SK-N-SH (cell line): ENCODE measurements at regions of chr6 and their contacts with region 1.

Region 1: GRCh38 chr6:91055959-91056358 is 469.1 kb upstream of the MAP3K7 start:
- DNase-seq: no peak
- H3K4me3 ChIP-seq: no peak overlapping the region
- H3K27ac ChIP-seq: no peak overlapping the region
- H3K4me1 ChIP-seq: no peaks in the 10 kb centered on the region
- H3K27me3 ChIP-seq: no peaks in the 10 kb centered on the region
- CTCF ChIP-seq: no peak
- EP300 ChIP-seq: no peak
- RAD21 ChIP-seq: no peak

Region 2: DNA sequence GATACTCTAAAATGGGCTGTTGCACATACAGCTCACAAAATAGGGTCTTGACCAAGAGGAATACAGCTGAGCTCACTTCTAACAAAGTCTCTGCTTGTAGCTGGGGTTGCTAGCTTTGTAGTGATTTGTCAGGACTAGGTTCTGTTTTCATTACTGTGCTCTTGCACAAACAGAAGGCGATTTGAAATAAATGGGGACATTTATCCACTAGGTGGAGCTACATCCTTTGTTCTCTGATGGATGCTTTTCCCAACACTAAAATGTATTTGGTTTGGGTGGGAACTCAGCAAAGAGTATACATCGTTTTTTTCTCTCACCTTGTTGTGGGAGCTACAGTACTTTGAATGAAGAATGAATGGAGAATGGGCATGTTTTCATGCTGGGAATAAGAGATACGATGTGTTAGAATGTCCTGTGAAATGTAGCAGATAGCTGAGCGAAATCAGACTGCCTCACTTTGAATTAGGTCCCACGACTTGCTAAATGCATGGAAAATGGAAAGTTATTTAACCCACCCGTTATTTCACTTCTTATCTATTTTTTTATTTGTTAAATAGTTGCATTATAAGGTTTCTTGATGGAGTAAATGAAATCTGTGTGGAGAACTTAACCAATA is 25.6 kb after region 1 on chr6:
- CTCF ChIA-PET with region 1: interaction called, 11 read pairs
- POLR2A ChIA-PET with region 1: no interaction called
- DNase-seq: peak; percentile 46
- H3K4me3 ChIP-seq: no peak overlapping the region
- H3K27ac ChIP-seq: no peak overlapping the region
- H3K4me1 ChIP-seq: no peaks in the 10 kb centered on the region; a peak in 1 of 4 replicates
- H3K27me3 ChIP-seq: no peaks in the 10 kb centered on the region; the same call in 1 of the 2 replicates
- CTCF ChIP-seq: peak; percentile 78
- EP300 ChIP-seq: no peak
- RAD21 ChIP-seq: peak; percentile 72